ENCODE measurements at regions of chr5 and their contacts with region 1.

Region 1: DNA sequence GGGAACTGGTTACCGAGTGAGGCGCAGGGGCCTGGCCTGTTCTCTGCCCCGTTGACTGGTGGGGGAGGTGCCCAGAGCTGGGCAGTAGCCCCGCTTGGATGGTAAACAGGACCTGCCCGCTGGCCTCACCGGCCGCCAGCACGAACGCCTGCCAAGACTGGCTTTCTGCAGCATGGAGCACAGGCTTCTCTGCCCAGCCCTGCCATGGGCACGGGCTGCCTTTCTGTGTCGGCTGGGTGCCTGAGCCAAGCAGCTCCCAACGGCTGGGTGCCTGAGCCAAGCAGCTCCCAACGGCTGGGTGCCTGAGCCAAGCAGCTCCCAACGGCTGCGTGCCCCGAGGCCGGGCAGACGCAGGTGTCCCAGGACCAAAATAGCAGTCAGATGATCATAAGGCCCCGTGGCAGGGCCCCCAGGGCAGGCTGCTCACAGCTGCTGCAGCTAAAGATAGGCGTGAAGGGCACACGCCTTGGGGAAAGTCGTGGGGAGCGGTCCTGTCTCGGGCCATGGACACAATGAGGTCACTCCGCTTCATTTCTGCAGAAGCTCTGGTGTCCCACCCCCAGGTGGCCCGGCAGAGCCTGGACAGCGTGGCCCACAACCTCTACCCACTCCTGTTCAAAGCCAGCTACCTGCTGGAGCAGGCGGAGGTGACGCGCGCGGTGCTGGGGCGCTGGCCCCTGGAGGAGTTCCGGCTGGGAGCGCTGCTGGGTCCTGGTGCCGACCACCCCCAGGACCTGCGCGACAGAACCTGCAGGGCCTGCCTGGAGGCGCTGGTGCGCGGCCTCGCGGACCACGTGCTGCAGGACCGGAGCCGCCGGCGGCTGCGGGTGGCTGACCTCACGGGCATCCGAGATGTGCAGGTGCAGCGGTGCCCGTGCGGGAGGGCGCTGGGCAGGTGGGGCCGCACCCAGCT is at the start of gene LRRC14B:
- DNase-seq: peak; percentile 84
- ATAC-seq: peak; percentile 74
- total RNA-seq, gene LRRC14B: 74.9 TPM

Region 2: DNA sequence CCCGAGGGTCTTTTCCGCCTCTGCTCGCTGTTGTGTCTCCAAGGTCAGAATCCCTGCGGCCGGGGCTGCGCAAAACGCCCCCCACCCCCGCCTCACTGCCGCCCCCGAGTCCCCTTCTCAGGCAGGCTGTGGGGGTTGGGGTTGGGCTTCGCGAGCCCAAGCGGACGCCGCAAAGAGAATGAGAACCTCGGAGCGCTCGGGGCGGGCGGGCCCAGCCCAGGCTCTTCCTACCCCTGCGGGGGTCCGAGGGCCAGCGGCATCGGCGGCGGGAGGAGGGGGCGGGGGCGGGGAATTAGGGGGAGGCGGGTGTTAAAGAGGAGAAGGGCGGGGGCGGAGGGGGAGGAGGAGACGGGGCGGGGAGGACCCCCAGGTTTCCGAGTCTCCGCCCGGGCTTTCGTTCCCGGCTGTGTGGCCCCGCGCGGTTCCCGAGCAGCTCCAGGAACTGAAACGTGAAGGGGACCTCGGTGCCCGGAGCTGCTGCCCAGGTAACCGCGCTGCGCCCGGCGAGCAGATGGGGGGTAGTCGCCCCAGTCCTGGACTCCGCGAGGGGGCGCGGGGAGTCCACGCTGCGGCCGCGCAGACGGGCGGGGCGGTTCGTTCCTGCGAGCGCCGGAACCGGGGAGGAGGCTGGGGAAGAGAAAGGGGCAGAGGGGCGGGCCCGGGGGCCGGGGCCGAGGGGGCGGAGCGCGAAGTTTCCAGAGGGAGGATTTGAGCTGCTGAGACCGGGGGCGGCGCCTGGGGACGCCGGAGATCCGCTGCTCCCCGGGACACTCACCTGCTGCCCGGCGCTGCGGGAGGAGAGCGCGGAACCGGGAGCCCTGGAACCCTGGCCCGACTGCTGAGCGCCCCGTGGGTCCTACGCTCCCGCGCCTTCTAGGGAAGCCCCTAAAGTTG is 137.8 kb before region 1 on chr5:
- intact Hi-C with region 1: no loop called
- DNase-seq: peak; percentile 63
- ATAC-seq: peak; percentile 40

Region 3: GRCh38 chr5:217860-218456 is 26.7 kb after region 1 on chr5 and contains the starts of genes CCDC127 and SDHA:
- intact Hi-C with region 1: loop called (anchors 2 kb)
- DNase-seq: peak; percentile 98
- ATAC-seq: peak; percentile 97
- total RNA-seq, gene CCDC127: 9.4 TPM
- total RNA-seq, gene SDHA: 811 TPM

Region 4: GRCh38 chr5:264346-264745 is 73.1 kb after region 1 on chr5:
- intact Hi-C with region 1: loop called (anchors 5 kb)
- DNase-seq: no peak
- ATAC-seq: peak; percentile 37

Region 5: GRCh38 chr5:1052641-1053390 is 861.5 kb after region 1 on chr5:
- intact Hi-C with region 1: no loop called
- DNase-seq: peak; percentile 70
- ATAC-seq: peak; percentile 61

Measured in Right ventricle myocardium inferior (tissue), 1 donor.